A673 (cell line): ENCODE measurements at regions of chr16 and their contacts with region 1.

Region 1: DNA sequence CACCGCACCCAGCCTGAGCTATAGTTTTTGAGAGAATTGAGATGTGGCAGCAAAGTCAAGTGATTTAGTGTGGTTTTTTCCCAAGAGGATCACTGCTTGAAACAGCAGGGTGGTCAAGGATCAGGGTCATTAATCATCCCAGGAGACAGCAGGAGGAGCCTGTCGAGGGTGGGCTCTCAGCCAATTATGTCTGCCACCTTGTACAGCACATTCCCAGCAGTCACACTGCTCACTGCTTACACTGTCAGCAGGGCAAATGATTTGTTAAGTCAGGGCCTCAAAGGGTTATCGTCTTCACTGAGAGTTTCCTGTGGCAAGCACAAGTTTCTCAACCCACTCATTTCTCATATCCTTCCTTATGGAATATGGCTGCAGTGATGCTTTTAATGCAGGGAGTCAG is 13.2 kb downstream of the B3GNT9 start:
- DNase-seq: peak; percentile 40
- H3K4me3 ChIP-seq: no peak overlapping the region
- H3K27ac ChIP-seq: no peak overlapping the region
- H3K4me1 ChIP-seq: no peaks in the 10 kb centered on the region
- H3K27me3 ChIP-seq: no peaks in the 10 kb centered on the region
- CTCF ChIP-seq: no peak

Region 2: DNA sequence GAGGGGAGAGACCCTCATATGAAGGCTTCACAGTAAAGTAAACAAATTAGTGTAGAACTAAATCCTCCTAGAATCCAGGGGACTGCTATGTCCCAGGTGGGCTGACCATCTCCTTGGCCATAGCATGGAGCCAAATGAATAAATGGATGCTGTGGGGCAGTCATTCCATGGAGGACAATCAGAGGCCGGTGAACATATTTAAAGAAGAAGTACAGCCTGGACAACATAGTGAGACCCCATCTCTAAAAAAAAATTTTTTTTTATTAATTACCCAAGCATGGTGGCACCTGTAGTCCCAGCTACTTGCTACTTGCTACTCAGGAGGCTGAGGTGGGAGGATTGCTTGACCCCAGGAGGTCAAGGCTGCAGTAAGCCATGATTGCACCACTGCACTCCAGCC is 113.9 kb before region 1 on chr16:
- CTCF ChIA-PET with region 1: no interaction called
- POLR2A ChIA-PET with region 1: no interaction called
- intact Hi-C with region 1: no loop called
- DNase-seq: no peak
- H3K4me3 ChIP-seq: no peak overlapping the region
- H3K27ac ChIP-seq: no peak overlapping the region
- H3K4me1 ChIP-seq: peaks cover 14% of the 10 kb centered on the region
- H3K27me3 ChIP-seq: no peaks in the 10 kb centered on the region
- CTCF ChIP-seq: no peak

Region 3: GRCh38 chr16:67040906-67041305 is 96.7 kb before region 1 on chr16:
- CTCF ChIA-PET with region 1: no interaction called
- POLR2A ChIA-PET with region 1: interaction called, 16 read pairs
- intact Hi-C with region 1: no loop called
- DNase-seq: no peak
- H3K4me3 ChIP-seq: no peak overlapping the region
- H3K27ac ChIP-seq: no peak overlapping the region
- H3K4me1 ChIP-seq: peaks cover 11% of the 10 kb centered on the region
- H3K27me3 ChIP-seq: no peaks in the 10 kb centered on the region
- CTCF ChIP-seq: no peak

Region 4: DNA sequence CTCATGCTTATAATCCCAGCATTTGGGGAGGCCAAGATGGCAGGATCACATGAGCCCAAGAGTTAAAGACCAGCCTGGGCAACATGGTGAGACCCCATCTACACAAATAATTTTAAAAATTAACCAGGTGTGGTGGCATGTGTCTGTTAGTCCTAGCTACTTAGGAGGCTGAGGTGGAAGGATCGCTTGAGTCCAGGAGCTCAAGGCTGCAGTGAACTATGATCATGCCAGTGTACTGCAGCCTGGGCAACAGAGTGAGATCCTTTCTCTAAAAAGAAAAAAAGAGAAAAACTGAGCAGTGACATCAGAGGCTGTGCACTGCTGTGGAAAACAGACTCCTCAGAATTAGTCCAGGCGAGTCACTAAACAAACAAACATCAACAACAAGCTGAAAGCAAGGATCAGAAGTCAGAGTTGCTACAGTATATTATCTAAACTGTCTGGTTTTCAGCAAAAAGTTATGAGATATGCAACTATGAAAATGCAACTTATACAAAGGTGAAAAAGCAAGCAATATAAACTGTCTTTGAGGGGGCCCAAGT is 69.3 kb before region 1 on chr16:
- CTCF ChIA-PET with region 1: no interaction called
- POLR2A ChIA-PET with region 1: no interaction called
- intact Hi-C with region 1: no loop called
- DNase-seq: no peak
- H3K4me3 ChIP-seq: no peak overlapping the region
- H3K27ac ChIP-seq: no peak overlapping the region
- H3K4me1 ChIP-seq: no peaks in the 10 kb centered on the region
- H3K27me3 ChIP-seq: no peaks in the 10 kb centered on the region
- CTCF ChIP-seq: no peak

Region 5: GRCh38 chr16:67246934-67247697 is 109.5 kb after region 1 on chr16 and contains the start of gene FHOD1:
- CTCF ChIA-PET with region 1: no interaction called
- POLR2A ChIA-PET with region 1: no interaction called
- intact Hi-C with region 1: no loop called
- DNase-seq: peak; percentile 98
- H3K4me3 ChIP-seq: peak within 1 kb of the TSS; percentile 90
- H3K27ac ChIP-seq: peak within 1 kb of the TSS; percentile 79
- H3K4me1 ChIP-seq: peaks cover 58% of the 10 kb centered on the region
- H3K27me3 ChIP-seq: no peaks in the 10 kb centered on the region
- CTCF ChIP-seq: no peak
- total RNA-seq, gene FHOD1: 94.9 and 96.4 TPM in 2 replicates